ENCODE measurements at regions of chr10 and their contacts with region 1.

Region 1: GRCh38 chr10:17923728-17924127 is 28.0 kb upstream of the SLC39A12 start:
- DNase-seq: peak; percentile 86 to 87
- H3K4me3 ChIP-seq: no peak overlapping the region; the same call in 1 of the 2 replicates
- H3K27ac ChIP-seq: peak overlapping the region; percentile 86
- H3K4me1 ChIP-seq: peaks cover 20% of the 10 kb centered on the region
- H3K27me3 ChIP-seq: no peaks in the 10 kb centered on the region
- CTCF ChIP-seq: no peak

Region 2: GRCh38 chr10:17882557-17882956 is 41.2 kb before region 1 on chr10:
- CTCF ChIA-PET with region 1: no interaction called
- POLR2A ChIA-PET with region 1: no interaction called
- intact Hi-C with region 1: no loop called
- DNase-seq: no peak
- H3K4me3 ChIP-seq: no peak overlapping the region
- H3K27ac ChIP-seq: no peak overlapping the region
- H3K4me1 ChIP-seq: no peaks in the 10 kb centered on the region
- H3K27me3 ChIP-seq: no peaks in the 10 kb centered on the region
- CTCF ChIP-seq: no peak

Region 3: DNA sequence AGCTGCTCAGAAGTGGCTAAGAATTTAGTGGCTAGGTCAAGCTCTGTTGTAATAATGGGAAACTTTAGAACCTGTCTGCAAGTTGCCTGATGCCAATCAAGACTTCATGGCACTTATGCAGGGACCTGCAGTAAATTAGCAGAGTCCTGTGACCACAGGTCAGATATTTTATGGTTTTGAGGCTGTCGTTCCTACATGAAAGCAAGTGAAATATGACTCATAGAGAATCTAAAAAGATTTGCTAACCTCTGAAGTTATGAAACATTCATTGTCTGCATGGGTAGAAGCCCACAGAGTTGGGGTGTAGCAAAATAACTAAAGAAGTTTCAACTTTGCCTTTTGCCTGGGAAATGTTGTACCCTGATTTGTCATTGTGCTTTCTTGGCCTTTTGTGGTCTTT is 60.3 kb after region 1 on chr10:
- CTCF ChIA-PET with region 1: no interaction called
- POLR2A ChIA-PET with region 1: no interaction called
- intact Hi-C with region 1: loop called (anchors 2 kb)
- DNase-seq: peak; percentile 29 to 35
- H3K4me3 ChIP-seq: no peak overlapping the region
- H3K27ac ChIP-seq: no peak overlapping the region
- H3K4me1 ChIP-seq: 0 out of 2 replicates have a peak, but pooled peaks cover 11% of the 10 kb centered on the region
- H3K27me3 ChIP-seq: no peaks in the 10 kb centered on the region
- CTCF ChIP-seq: no peak

Region 4: DNA sequence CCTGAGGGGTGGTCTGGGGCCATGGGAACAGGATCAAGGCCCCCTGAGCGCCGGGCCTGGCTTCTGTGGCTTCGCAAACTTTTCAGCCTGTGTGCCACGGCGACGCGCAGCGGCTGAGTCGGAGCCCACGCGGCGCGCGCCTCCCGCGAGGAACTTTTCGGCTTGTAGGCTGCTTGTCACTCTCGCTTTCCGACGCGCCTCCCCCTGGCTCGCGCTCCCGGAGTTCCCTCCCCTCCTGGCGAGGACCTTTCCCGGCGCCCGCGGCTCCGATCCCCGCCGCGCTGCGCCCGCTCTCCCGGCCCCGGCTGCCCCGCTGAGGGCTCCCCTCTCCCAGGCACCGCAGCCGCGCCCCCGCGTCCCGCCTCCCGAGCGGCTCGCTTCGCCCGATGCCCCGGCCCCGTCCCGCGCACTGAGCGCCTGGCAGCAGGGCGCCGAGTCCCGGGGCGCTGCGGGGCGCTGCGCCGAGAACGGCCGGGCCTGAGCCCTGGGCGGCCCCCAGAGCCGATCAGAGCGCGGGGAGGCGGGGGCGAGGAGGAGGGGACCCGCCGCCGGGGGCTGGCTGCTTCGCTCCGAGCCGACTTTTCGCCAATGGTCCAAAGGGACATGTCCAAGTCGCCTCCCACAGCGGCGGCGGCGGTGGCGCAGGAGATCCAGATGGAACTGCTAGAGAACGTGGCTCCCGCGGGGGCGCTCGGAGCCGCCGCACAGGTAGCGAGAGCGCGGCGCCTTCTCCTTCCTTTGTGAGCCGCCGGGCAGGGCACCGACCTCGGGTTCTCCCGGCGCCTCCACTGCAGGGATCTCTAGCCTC is 216.6 kb after region 1 on chr10 and contains the start of gene CACNB2:
- CTCF ChIA-PET with region 1: no interaction called
- POLR2A ChIA-PET with region 1: no interaction called
- intact Hi-C with region 1: no loop called
- DNase-seq: peak in 1 of 2 experiments; percentile 27
- H3K4me3 ChIP-seq: peak within 1 kb of the TSS; percentile 14; the same call in 1 of the 2 replicates
- H3K27ac ChIP-seq: no peak within 1 kb of the TSS
- H3K4me1 ChIP-seq: no peaks in the 10 kb centered on the region
- H3K27me3 ChIP-seq: no peaks in the 10 kb centered on the region; the same call in 1 of the 2 replicates
- CTCF ChIP-seq: no peak
- total RNA-seq, gene CACNB2: not detected in 2 replicates

Region 5: DNA sequence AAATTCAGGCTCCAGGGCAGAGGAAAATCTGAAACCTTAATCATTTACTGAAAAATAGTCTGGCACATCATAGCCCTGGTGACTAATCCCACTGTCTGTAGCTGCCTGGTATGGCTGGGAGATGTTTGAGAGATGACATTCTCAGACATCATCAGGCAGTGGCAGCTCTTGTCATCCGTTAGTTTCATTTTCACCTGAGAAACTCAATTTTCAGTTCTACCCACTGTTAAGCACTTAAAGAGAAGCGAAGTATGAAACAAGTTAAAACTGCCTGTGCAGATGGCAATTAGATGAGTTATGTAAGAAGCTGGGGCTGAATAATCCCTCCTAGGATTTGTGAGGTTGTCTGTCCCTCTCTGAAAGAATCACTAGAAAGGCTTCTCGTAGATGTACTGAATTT is 577.5 kb after region 1 on chr10:
- CTCF ChIA-PET with region 1: no interaction called
- POLR2A ChIA-PET with region 1: no interaction called
- intact Hi-C with region 1: no loop called
- DNase-seq: no peak
- H3K4me3 ChIP-seq: no peak overlapping the region
- H3K27ac ChIP-seq: no peak overlapping the region
- H3K4me1 ChIP-seq: no peaks in the 10 kb centered on the region
- H3K27me3 ChIP-seq: no peaks in the 10 kb centered on the region; the same call in 1 of the 2 replicates
- CTCF ChIP-seq: no peak